Breast epithelium (tissue), 4 donors: ENCODE measurements at regions of chr14 and their contacts with region 1.

Region 1: DNA sequence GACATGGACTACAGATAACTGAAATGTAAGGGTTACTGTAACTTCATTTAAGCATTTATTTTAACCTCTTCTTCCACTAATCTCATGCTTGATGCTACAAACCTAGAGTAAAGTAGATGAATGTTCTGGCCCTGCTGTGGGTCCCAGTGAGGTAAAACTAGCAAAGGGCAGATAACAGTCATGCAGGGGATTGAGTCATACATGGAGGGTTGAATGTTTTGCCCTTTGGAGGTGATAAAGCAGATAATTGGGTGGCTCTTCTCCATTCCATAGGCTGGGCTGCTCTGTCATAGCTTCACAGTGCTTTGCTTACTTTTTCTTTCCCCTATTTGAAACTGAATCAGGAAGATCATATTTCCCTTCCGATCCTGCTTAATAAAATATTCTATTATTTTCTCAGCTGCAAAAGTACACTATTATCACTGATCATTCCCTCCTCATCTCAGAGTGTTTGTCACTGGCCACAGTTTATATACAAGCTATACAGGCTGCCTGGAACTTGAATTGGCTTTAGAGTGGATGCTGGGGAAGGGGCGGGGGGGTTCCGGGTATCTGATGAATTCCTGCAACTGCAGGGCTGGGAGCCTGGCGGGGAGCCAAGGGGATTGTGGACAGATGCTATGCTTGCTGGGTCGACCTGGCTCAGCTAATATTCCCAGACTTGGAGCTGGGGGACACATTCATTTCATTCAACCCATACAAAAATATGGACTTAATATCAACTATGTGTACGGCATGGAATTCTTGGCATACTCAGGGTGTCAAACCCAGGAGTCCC is 235.1 kb downstream of the NRXN3 start:
- DNase-seq: no peak
- H3K4me3 ChIP-seq: no peak overlapping the region
- H3K27ac ChIP-seq: no peak overlapping the region
- H3K4me1 ChIP-seq: no peaks in the 10 kb centered on the region
- H3K27me3 ChIP-seq: peaks cover 0 to 11% of the 10 kb centered on the region in 2 donors
- CTCF ChIP-seq: no peak
- POLR2A ChIP-seq: no peak

Region 2: GRCh38 chr14:78356391-78356790 is 48.9 kb before region 1 on chr14:
- intact Hi-C with region 1: loop called (anchors 2 kb)
- DNase-seq: no peak
- H3K4me3 ChIP-seq: no peak overlapping the region
- H3K27ac ChIP-seq: no peak overlapping the region
- H3K4me1 ChIP-seq: no peaks in the 10 kb centered on the region
- H3K27me3 ChIP-seq: no peaks in the 10 kb centered on the region
- CTCF ChIP-seq: no peak
- POLR2A ChIP-seq: no peak